SK-N-SH (cell line): ENCODE measurements at regions of chr13 and their contacts with region 1.

Region 1: GRCh38 chr13:46762449-46762848 is 34.5 kb downstream of the ESD start:
- DNase-seq: no peak
- H3K4me3 ChIP-seq: no peak overlapping the region
- H3K27ac ChIP-seq: no peak overlapping the region
- H3K4me1 ChIP-seq: peaks cover 0 to 5% of the 10 kb centered on the region in 2 experiments; a peak in 1 of 4 replicates
- H3K27me3 ChIP-seq: no peaks in the 10 kb centered on the region
- CTCF ChIP-seq: no peak
- EP300 ChIP-seq: no peak
- RAD21 ChIP-seq: no peak

Region 2: DNA sequence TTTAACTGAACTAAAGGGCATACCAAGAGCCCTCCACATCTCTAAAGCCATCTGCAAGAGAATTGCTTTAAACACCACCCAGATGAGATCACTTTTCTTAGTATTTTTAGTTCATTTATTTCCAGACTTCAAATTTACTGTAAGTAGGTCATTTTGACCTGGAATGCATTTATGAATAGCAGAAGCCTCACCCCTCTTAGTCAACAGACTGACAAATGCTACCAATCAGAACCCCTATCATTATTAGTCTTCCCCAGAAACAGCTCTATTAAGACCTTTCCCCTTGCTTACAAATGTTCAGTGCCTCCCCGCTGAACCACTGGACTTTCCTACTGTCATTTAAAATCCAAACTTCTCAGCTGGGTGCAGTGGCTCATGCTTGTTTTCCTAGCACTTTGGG is 402.7 kb before region 1 on chr13:
- CTCF ChIA-PET with region 1: no interaction called
- POLR2A ChIA-PET with region 1: no interaction called
- DNase-seq: no peak
- H3K4me3 ChIP-seq: no peak overlapping the region
- H3K27ac ChIP-seq: peak overlapping the region in 1 of 2 experiments; percentile 63; a peak in 2 of 4 replicates
- H3K4me1 ChIP-seq: 0 out of 4 replicates have a peak, but pooled peaks cover 0 to 3% of the 10 kb centered on the region in 2 experiments
- H3K27me3 ChIP-seq: no peaks in the 10 kb centered on the region
- CTCF ChIP-seq: no peak
- EP300 ChIP-seq: no peak
- RAD21 ChIP-seq: no peak

Region 3: GRCh38 chr13:46775385-46776107 is 13.1 kb after region 1 on chr13:
- CTCF ChIA-PET with region 1: interaction called, 12 read pairs
- POLR2A ChIA-PET with region 1: no interaction called
- DNase-seq: no peak
- H3K4me3 ChIP-seq: no peak overlapping the region
- H3K27ac ChIP-seq: no peak overlapping the region
- H3K4me1 ChIP-seq: no peaks in the 10 kb centered on the region; a peak in 2 of 4 replicates
- H3K27me3 ChIP-seq: no peaks in the 10 kb centered on the region
- CTCF ChIP-seq: no peak
- EP300 ChIP-seq: no peak
- RAD21 ChIP-seq: no peak

Region 4: DNA sequence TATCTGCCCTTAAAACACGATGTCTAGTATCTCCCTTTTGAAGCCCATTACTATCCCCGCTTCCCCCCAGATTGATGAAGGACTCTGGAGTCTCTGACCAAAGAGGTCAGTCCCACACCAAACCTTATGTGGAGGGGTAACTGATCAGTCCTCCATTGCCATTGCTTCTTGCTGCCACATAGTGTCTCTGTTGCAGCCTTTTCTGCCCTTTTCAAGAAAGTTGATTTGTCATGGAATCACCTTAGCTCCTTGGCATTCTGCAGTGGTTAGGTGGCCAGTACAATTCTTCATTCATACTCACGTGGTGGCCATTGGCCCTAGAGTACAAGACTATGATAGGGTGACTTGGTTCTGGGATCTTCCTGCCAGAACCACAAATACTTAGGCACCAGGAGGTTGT is 142.8 kb after region 1 on chr13:
- CTCF ChIA-PET with region 1: no interaction called
- POLR2A ChIA-PET with region 1: no interaction called
- DNase-seq: no peak
- H3K4me3 ChIP-seq: no peak overlapping the region
- H3K27ac ChIP-seq: no peak overlapping the region
- H3K4me1 ChIP-seq: peaks cover 0 to 3% of the 10 kb centered on the region in 2 experiments; a peak in 3 of 4 replicates
- H3K27me3 ChIP-seq: no peaks in the 10 kb centered on the region
- CTCF ChIP-seq: peak; percentile 42
- EP300 ChIP-seq: no peak
- RAD21 ChIP-seq: peak; percentile 43; the same call in 1 of the 2 replicates

Region 5: GRCh38 chr13:46934749-46935148 is 172.3 kb after region 1 on chr13:
- CTCF ChIA-PET with region 1: no interaction called
- POLR2A ChIA-PET with region 1: no interaction called
- DNase-seq: no peak
- H3K4me3 ChIP-seq: no peak overlapping the region
- H3K27ac ChIP-seq: no peak overlapping the region
- H3K4me1 ChIP-seq: no peaks in the 10 kb centered on the region
- H3K27me3 ChIP-seq: no peaks in the 10 kb centered on the region
- CTCF ChIP-seq: no peak
- EP300 ChIP-seq: no peak
- RAD21 ChIP-seq: no peak